Activated B cell treated with CpG ODN at 0.5 μM for 24 hours (primary cell): ENCODE measurements at regions of chr2 and their contacts with region 1.

Region 1: GRCh38 chr2:73233154-73233931 is at the start of gene PRADC1:
- DNase-seq: peak; percentile 84
- ATAC-seq: peak; percentile 87
- H3K4me3 Mint-ChIP-seq: peak within 1 kb of the TSS; percentile 95
- H3K27ac Mint-ChIP-seq: peak within 1 kb of the TSS; percentile 93
- H3K4me1 Mint-ChIP-seq: peaks cover 38% of the 10 kb centered on the region
- H3K27me3 Mint-ChIP-seq: no peaks in the 10 kb centered on the region
- CTCF ChIP-seq: no peak
- total RNA-seq, gene PRADC1: 4.6 and 4.7 TPM in 2 replicates

Region 2: GRCh38 chr2:72825241-72826155 is 407.8 kb before region 1 on chr2 and contains the start of gene EXOC6B:
- CTCF ChIA-PET with region 1: no interaction called
- POLR2A ChIA-PET with region 1: no interaction called
- intact Hi-C with region 1: loop called (anchors 5 kb)
- DNase-seq: peak; percentile 79
- ATAC-seq: peak; percentile 89
- H3K4me3 Mint-ChIP-seq: peak within 1 kb of the TSS; percentile 97
- H3K27ac Mint-ChIP-seq: peak within 1 kb of the TSS; percentile 68
- H3K4me1 Mint-ChIP-seq: peaks cover 24% of the 10 kb centered on the region
- H3K27me3 Mint-ChIP-seq: peaks cover 12% of the 10 kb centered on the region
- CTCF ChIP-seq: no peak
- total RNA-seq, gene EXOC6B: 13.0 and 13.8 TPM in 2 replicates

Region 3: DNA sequence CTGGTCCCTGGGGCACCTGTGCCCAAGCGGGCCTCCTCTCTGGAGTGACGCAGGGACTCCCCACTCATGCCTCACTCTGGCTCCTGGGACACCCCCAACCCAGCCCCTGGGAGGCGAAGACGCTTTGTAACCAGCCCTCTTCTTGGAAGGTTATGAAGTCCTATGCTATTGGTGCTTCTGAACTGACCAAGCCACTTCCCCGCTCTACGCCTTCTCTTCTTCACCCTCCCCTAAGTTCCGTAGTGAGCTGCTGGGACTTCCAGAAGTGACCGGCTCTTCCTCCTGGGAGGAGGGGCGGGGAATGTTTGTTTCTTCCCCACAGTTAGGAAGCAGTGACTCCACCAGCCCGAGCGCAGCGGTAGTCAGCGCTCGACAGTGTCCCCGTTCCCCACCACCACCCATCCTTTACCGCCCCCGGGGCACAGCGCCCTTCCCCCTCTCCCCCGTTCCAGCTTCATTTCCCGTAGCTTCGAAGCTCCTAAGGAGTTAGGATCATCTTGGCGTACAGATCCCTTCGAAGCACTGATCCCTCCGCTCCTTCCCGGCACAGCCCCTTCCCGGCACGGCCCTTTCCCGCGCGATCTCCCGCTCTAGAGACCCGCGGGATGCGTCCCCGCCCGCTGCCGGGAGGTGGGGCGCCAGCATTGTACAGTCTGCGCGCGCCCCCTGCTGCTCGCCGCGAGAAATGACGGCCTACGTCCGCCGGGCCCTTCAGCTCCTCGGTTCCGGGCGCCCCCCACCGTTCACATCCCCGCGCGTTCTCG is 56.3 kb before region 1 on chr2:
- CTCF ChIA-PET with region 1: interaction called, 7 read pairs
- POLR2A ChIA-PET with region 1: interaction called, 8 read pairs
- intact Hi-C with region 1: loop called (anchors 1 kb)
- DNase-seq: peak; percentile 87
- ATAC-seq: peak; percentile 92
- H3K4me3 Mint-ChIP-seq: peak overlapping the region; percentile 94
- H3K27ac Mint-ChIP-seq: peak overlapping the region; percentile 46
- H3K4me1 Mint-ChIP-seq: peaks cover 15% of the 10 kb centered on the region
- H3K27me3 Mint-ChIP-seq: peaks cover 43% of the 10 kb centered on the region
- CTCF ChIP-seq: peak; percentile 69

Region 4: DNA sequence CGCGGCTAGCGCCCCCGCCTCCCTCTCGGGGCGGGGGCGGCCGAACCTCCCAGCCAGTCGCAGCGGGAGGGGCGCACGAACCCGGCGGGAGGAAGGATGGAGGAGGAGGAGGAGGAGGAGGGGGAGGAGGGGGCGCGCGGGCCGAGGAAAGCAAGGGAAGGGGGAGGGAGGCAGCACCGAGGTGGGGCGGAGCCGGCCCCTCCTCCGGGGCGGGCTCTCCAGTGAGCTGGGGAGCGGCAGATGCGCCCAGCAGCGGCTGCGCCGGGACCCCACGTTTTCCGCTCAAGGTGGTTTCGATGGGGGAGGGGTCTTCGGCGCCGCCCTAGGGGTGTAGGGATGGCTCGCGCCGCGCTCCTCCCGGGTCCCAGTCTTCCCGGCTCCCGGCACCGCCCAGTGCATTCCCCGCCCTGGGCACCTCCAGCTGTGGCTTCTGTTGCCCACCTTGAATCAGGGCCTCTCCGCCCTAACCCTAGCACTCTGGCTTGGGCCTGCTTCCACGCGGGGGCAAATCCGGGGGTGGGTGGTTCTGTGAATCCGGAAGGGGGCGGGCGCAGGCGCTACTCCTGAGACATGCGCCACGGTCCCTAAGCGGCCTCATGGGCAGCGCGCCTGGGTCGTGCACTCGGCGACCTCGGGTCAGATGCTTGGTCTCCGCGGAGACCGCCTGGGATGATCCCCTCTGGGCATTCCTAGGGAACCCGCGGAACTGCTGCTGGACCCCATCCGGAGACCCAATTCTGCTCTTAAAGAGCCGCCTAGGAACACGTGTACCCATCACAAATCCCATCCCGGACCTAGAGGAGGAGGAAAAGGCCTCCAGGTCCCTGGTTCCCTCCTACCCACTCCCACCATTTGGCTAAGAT is 51.2 kb after region 1 on chr2 and contains the start of gene FBXO41:
- CTCF ChIA-PET with region 1: interaction called, 9 read pairs
- POLR2A ChIA-PET with region 1: interaction called, 51 read pairs
- intact Hi-C with region 1: loop called (anchors 1 kb)
- DNase-seq: peak; percentile 67
- ATAC-seq: peak; percentile 73
- H3K4me3 Mint-ChIP-seq: peak within 1 kb of the TSS; percentile 82
- H3K27ac Mint-ChIP-seq: peak within 1 kb of the TSS; percentile 89
- H3K4me1 Mint-ChIP-seq: peaks cover 36% of the 10 kb centered on the region
- H3K27me3 Mint-ChIP-seq: no peaks in the 10 kb centered on the region
- CTCF ChIP-seq: no peak
- total RNA-seq, gene FBXO41: 21.4 and 25.7 TPM in 2 replicates

Region 5: GRCh38 chr2:73736855-73737779 is 503.8 kb after region 1 on chr2 and contains the start of gene TPRKB:
- CTCF ChIA-PET with region 1: no interaction called
- POLR2A ChIA-PET with region 1: interaction called, 8 read pairs
- intact Hi-C with region 1: loop called (anchors 1 kb)
- DNase-seq: peak; percentile 85
- ATAC-seq: peak; percentile 98
- H3K4me3 Mint-ChIP-seq: peak within 1 kb of the TSS; percentile 94
- H3K27ac Mint-ChIP-seq: peak within 1 kb of the TSS; percentile 90
- H3K4me1 Mint-ChIP-seq: peaks cover 18% of the 10 kb centered on the region
- H3K27me3 Mint-ChIP-seq: no peaks in the 10 kb centered on the region
- CTCF ChIP-seq: no peak
- total RNA-seq, gene TPRKB: 26.9 and 27.1 TPM in 2 replicates

Region 6: GRCh38 chr2:74653985-74654882 is 1420.9 kb after region 1 on chr2 and contains the start of gene SEMA4F:
- CTCF ChIA-PET with region 1: no interaction called
- POLR2A ChIA-PET with region 1: interaction called, 3 read pairs
- intact Hi-C with region 1: loop called (anchors 5 kb)
- DNase-seq: peak; percentile 92
- ATAC-seq: peak; percentile 99
- H3K4me3 Mint-ChIP-seq: peak within 1 kb of the TSS; percentile 91
- H3K27ac Mint-ChIP-seq: peak within 1 kb of the TSS; percentile 82
- H3K4me1 Mint-ChIP-seq: peaks cover 16% of the 10 kb centered on the region
- H3K27me3 Mint-ChIP-seq: peaks cover 9% of the 10 kb centered on the region
- CTCF ChIP-seq: no peak
- total RNA-seq, gene SEMA4F: 10.2 and 11.6 TPM in 2 replicates